ENCODE measurements at regions of chr17 and their contacts with region 1.

Region 1: GRCh38 chr17:32877164-32877764 is 340 bp upstream of the MYO1D start:
- DNase-seq: peak; percentile 87
- H3K4me3 ChIP-seq: peak overlapping the region; percentile 37 to 96 (median 81)
- H3K27ac ChIP-seq: peak overlapping the region; percentile 98
- H3K4me1 ChIP-seq: peaks cover 29% of the 10 kb centered on the region
- H3K27me3 ChIP-seq: no peaks in the 10 kb centered on the region
- CTCF ChIP-seq: peak; percentile 63 to 80

Region 2: DNA sequence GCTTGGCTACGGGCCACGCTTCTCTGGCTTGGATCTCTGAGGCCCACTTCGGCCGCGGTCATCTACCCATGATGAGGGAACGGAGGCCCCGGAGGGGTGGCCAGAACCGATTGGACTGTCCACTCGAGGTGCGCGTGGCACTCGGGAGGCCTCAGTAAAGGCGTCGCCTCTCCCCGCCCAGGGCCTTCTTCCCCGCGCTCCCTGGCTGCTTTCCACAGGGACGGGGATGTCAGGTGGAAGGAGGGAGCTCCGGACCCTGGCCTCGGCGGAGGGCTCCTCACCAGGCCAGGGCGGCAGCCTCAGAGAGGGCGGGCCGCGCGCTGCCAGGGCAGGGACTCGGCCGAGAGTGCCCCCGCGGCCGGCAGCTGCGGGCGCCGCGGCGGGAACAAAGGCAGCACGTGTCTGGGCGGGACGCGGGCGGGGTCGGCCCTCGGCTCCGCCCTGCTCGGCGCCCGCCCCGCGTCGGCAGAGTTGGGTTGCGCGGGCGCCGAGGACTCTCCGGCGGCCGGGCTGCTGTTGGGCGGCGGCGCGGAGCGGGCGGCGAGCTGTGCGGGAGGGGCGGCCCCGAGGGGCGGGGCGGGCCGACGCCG is 391.1 kb before region 1 on chr17:
- CTCF ChIA-PET with region 1: no interaction called
- dilution Hi-C with region 1: no loop called
- in situ Hi-C with region 1: no loop called
- intact Hi-C with region 1: loop called (anchors 10 kb)
- DNase-seq: peak; percentile 73
- H3K4me3 ChIP-seq: peak overlapping the region in 2 of 3 experiments; percentile 60 to 72
- H3K27ac ChIP-seq: no peak overlapping the region
- H3K4me1 ChIP-seq: peaks cover 21% of the 10 kb centered on the region
- H3K27me3 ChIP-seq: no peaks in the 10 kb centered on the region
- CTCF ChIP-seq: no peak

Region 3: GRCh38 chr17:32794533-32795246 is 82.6 kb before region 1 on chr17:
- CTCF ChIA-PET with region 1: no interaction called
- dilution Hi-C with region 1: no loop called
- in situ Hi-C with region 1: loop called (anchors 10 kb)
- intact Hi-C with region 1: no loop called
- DNase-seq: no peak
- H3K4me3 ChIP-seq: no peak overlapping the region
- H3K27ac ChIP-seq: no peak overlapping the region
- H3K4me1 ChIP-seq: no peaks in the 10 kb centered on the region
- H3K27me3 ChIP-seq: no peaks in the 10 kb centered on the region
- CTCF ChIP-seq: no peak

Region 4: DNA sequence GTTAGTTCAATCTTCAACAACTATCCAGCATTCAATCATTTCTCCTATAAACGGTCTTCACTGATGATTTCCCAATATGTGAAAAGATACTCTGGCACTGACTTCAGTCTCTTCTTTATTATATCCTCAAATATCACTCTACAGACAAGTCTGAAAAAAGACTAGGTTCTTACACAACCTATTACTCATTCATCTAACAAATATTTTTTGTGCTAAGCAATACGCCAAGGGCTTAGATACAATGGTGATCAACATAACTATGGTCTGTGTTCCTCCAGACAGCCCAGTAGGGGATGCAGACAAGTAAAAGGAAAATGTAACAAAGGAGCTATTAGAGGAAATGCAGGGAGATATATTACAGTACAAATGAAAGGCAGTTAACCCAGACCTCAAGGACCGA is 64.2 kb before region 1 on chr17:
- CTCF ChIA-PET with region 1: no interaction called
- dilution Hi-C with region 1: no loop called
- in situ Hi-C with region 1: no loop called
- intact Hi-C with region 1: no loop called
- DNase-seq: peak; percentile 70
- H3K4me3 ChIP-seq: no peak overlapping the region
- H3K27ac ChIP-seq: no peak overlapping the region
- H3K4me1 ChIP-seq: peaks cover 12% of the 10 kb centered on the region
- H3K27me3 ChIP-seq: no peaks in the 10 kb centered on the region
- CTCF ChIP-seq: no peak

Region 5: GRCh38 chr17:32936894-32937500 is 59.7 kb after region 1 on chr17:
- CTCF ChIA-PET with region 1: interaction called, 3 read pairs
- dilution Hi-C with region 1: loop called (anchors 10 kb)
- in situ Hi-C with region 1: no loop called
- intact Hi-C with region 1: loop called (anchors 2 kb)
- DNase-seq: peak; percentile 59
- H3K4me3 ChIP-seq: no peak overlapping the region
- H3K27ac ChIP-seq: peak overlapping the region; percentile 43
- H3K4me1 ChIP-seq: peaks cover 17% of the 10 kb centered on the region
- H3K27me3 ChIP-seq: no peaks in the 10 kb centered on the region
- CTCF ChIP-seq: peak; percentile 77 to 81

Region 6: DNA sequence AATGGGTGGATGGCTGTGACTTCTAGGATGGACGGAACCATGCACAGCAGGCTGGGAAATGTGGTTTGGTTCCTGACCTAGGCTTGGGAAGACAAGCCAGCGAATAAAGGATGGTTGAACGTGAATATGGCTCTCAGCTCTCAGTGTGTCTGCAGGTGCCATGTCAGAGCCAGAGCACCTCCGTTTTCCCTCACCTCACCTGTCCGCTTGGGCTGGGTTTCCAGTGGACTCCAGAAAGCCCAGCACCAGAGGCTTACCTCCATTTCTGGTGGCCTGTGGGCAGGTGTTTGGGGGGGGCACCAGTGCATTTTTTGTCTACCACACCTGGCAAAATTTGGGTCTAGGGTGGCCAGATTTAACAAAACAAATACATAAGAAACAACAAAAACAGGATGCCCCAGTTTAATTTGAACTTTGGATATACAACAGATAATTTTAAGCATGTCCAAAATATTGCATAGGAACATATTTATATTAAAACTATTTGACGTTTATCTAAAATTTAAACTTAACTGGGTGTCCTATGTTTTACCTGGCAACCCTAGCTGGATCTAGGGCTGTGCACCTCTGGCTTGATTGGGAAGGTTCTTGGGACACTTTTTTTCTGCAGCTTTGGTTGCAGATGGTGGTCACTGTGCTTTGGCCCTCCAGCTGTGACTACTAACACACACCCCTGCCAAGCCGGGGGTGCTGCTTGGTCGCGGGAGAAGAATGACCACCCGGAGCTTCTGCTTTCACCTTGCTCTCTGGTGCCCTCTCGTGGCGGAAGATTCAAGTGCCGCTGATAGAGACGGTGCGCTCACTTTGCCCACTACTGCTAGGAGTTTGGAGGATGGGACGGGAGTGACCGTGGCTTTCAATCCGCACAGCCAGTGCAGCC is 120.7 kb after region 1 on chr17:
- CTCF ChIA-PET with region 1: no interaction called
- dilution Hi-C with region 1: no loop called
- in situ Hi-C with region 1: no loop called
- intact Hi-C with region 1: loop called (anchors 5 kb)
- DNase-seq: peak; percentile 61
- H3K4me3 ChIP-seq: peak overlapping the region in 2 of 3 experiments; percentile 6 to 10
- H3K27ac ChIP-seq: no peak overlapping the region
- H3K4me1 ChIP-seq: peaks cover 8% of the 10 kb centered on the region
- H3K27me3 ChIP-seq: no peaks in the 10 kb centered on the region
- CTCF ChIP-seq: peak; percentile 90

Region 7: DNA sequence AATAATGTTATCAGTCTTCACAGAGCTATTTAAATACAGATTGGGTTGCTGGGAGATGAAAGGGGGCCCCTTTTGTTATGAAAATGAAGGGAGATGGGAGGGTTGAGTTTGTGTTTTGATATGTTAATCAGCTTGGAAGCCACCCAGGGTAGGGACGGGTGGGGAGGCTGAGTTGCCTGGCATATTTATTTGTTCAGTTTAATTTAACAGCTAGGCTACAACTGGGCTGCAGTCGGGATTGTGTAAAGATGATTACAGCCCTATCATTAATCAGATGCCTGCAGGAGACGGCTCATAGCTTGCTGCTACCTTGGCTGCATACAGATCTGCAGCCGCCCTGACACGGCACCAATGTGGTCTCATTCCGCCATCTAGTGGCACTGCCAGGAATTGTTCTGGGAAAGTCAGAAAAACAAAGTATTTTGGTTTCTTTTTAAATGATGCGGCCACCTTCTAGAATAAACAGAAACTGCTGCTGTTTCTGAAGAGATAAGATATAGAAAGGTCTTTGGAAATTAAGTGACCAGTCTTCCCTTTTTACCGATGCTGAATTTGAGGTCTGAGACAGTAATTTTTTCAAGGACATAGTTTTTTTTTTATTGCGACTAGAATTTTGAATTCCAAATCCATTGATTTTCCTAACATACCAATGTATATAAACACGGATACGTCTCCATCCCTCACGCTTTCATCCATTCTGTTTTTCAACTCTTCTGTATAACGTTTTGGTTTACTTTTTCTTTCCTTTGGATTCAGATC is 873.9 kb after region 1 on chr17:
- CTCF ChIA-PET with region 1: no interaction called
- dilution Hi-C with region 1: no loop called
- in situ Hi-C with region 1: no loop called
- intact Hi-C with region 1: loop called (anchors 1 kb)
- DNase-seq: peak; percentile 28
- H3K4me3 ChIP-seq: peak overlapping the region in 2 of 3 experiments; percentile 32 to 33
- H3K27ac ChIP-seq: no peak overlapping the region
- H3K4me1 ChIP-seq: no peaks in the 10 kb centered on the region
- H3K27me3 ChIP-seq: no peaks in the 10 kb centered on the region
- CTCF ChIP-seq: peak; percentile 85 to 89